GM12878 (cell line): ENCODE measurements at regions of chr11 and their contacts with region 1.

Region 1: GRCh38 chr11:95659088-95659487 is 130.5 kb downstream of the FAM76B start:
- DNase-seq: no peak
- ATAC-seq: no peak
- H3K4me3 ChIP-seq: no peak overlapping the region
- H3K27ac ChIP-seq: no peak overlapping the region
- H3K4me1 ChIP-seq: no peaks in the 10 kb centered on the region
- H3K27me3 ChIP-seq: no peaks in the 10 kb centered on the region
- CTCF ChIP-seq: no peak
- EP300 ChIP-seq: no peak
- POLR2A ChIP-seq: no peak
- RAD21 ChIP-seq: no peak

Region 2: DNA sequence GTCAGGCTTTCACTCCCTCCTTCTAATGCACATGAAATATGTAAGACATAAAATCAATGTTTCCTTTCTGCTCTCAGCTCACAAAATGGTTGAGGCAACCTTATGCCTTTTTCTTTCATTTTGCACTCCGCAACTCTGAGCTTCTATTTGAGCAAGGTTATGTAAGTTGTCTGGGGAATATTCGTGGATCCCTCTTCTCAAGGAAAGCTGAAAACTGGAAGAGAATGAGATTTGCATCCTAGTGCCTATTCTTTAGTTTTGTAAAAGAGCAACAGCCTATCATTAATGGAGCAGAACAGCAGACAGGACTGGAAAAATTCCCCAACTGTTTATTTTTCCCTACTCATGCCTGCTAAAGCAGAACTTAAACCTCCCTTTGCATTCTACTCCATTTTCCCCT is 11.2 kb before region 1 on chr11:
- CTCF ChIA-PET with region 1: no interaction called
- POLR2A ChIA-PET with region 1: no interaction called
- RAD21 ChIA-PET with region 1: no interaction called
- SMC1A ChIA-PET with region 1: interaction called, 14 read pairs
- in situ Hi-C with region 1: no loop called
- intact Hi-C with region 1: no loop called
- DNase-seq: no peak
- ATAC-seq: no peak
- H3K4me3 ChIP-seq: no peak overlapping the region
- H3K27ac ChIP-seq: no peak overlapping the region
- H3K4me1 ChIP-seq: no peaks in the 10 kb centered on the region
- H3K27me3 ChIP-seq: no peaks in the 10 kb centered on the region
- CTCF ChIP-seq: no peak
- EP300 ChIP-seq: no peak
- POLR2A ChIP-seq: no peak
- RAD21 ChIP-seq: no peak

Region 3: DNA sequence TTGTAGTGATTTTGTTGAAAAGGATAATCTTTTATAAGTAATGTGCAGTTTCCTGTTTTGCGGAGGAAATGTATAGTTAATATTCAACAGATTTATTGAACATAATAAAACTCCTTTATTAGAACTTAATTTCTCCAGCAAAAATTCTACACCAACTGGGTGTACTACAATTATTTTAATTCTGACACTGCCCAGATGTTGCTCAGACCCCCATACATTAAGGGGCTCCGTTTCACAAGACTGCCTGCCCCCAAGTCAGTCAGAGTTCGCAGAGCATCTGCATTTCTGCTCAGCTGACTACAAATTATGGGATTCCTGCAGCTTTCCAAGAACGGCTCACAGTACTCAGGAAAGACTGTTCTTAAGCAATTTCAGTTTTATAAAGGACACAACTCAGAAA is 137.4 kb after region 1 on chr11:
- CTCF ChIA-PET with region 1: no interaction called
- POLR2A ChIA-PET with region 1: no interaction called
- RAD21 ChIA-PET with region 1: no interaction called
- SMC1A ChIA-PET with region 1: no interaction called
- in situ Hi-C with region 1: no loop called
- intact Hi-C with region 1: no loop called
- DNase-seq: no peak
- ATAC-seq: no peak
- H3K4me3 ChIP-seq: no peak overlapping the region
- H3K27ac ChIP-seq: no peak overlapping the region
- H3K4me1 ChIP-seq: 0 out of 2 replicates have a peak, but pooled peaks cover 3% of the 10 kb centered on the region
- H3K27me3 ChIP-seq: no peaks in the 10 kb centered on the region
- CTCF ChIP-seq: no peak
- EP300 ChIP-seq: no peak
- POLR2A ChIP-seq: no peak
- RAD21 ChIP-seq: no peak